ENCODE measurements at regions of chr13 and their contacts with region 1.

Region 1: GRCh38 chr13:63433546-63434150 is 2018.0 kb upstream of the PCDH20 start:
- DNase-seq: no peak
- ATAC-seq: no peak
- H3K4me3 ChIP-seq: no peak overlapping the region
- H3K27ac ChIP-seq: no peak overlapping the region
- H3K4me1 ChIP-seq: no peaks in the 10 kb centered on the region
- H3K27me3 ChIP-seq: no peaks in the 10 kb centered on the region
- CTCF ChIP-seq: no peak
- EP300 ChIP-seq: no peak
- POLR2A ChIP-seq: no peak
- RAD21 ChIP-seq: no peak

Region 2: DNA sequence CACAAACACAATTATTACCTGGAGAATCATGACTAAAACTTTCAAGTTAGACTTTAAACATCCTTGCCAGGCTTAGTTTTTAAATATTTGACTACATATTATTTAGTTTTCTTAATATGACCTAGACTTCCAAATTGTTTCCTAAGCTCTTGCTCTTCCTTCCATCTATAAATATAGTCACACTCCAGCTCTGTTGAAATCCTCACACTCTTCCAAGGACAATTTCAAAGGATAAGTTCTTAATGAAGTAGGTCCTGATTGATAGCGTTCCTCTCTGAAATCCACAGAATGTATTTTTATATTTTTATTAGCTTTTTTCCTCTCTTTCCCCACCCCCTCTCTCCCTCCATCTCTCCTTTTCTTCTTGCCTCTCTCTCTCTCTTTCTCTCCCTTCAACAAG is 943.9 kb before region 1 on chr13:
- CTCF ChIA-PET with region 1: no interaction called
- POLR2A ChIA-PET with region 1: no interaction called
- in situ Hi-C with region 1: no loop called
- intact Hi-C with region 1: loop called (anchors 5 kb)
- DNase-seq: no peak
- ATAC-seq: no peak
- H3K4me3 ChIP-seq: no peak overlapping the region
- H3K27ac ChIP-seq: no peak overlapping the region
- H3K4me1 ChIP-seq: no peaks in the 10 kb centered on the region
- H3K27me3 ChIP-seq: no peaks in the 10 kb centered on the region
- CTCF ChIP-seq: no peak
- EP300 ChIP-seq: no peak
- POLR2A ChIP-seq: no peak
- RAD21 ChIP-seq: no peak

Region 3: GRCh38 chr13:63393112-63393511 is 40.5 kb before region 1 on chr13:
- CTCF ChIA-PET with region 1: no interaction called
- POLR2A ChIA-PET with region 1: no interaction called
- in situ Hi-C with region 1: no loop called
- intact Hi-C with region 1: no loop called
- DNase-seq: no peak
- ATAC-seq: no peak
- H3K4me3 ChIP-seq: no peak overlapping the region
- H3K27ac ChIP-seq: no peak overlapping the region
- H3K4me1 ChIP-seq: no peaks in the 10 kb centered on the region
- H3K27me3 ChIP-seq: no peaks in the 10 kb centered on the region
- CTCF ChIP-seq: no peak
- EP300 ChIP-seq: no peak
- POLR2A ChIP-seq: no peak
- RAD21 ChIP-seq: no peak